CD8-positive, alpha-beta T cell (primary cell): ENCODE measurements at regions of chr15 and their contacts with region 1.

Region 1: GRCh38 chr15:79051029-79051428 is 39.6 kb downstream of the RASGRF1 start:
- DNase-seq: no peak
- ATAC-seq: no peak
- H3K4me3 ChIP-seq: no peak overlapping the region
- H3K4me3 Mint-ChIP-seq: no peak overlapping the region
- H3K27ac ChIP-seq: no peak overlapping the region
- H3K27ac Mint-ChIP-seq: no peak overlapping the region
- H3K4me1 ChIP-seq: no peaks in the 10 kb centered on the region
- H3K4me1 Mint-ChIP-seq: no peaks in the 10 kb centered on the region
- H3K27me3 ChIP-seq: no peaks in the 10 kb centered on the region
- H3K27me3 Mint-ChIP-seq: peaks cover 5% of the 10 kb centered on the region
- CTCF ChIP-seq: no peak

Region 2: GRCh38 chr15:78907577-78907976 is 143.5 kb before region 1 on chr15:
- CTCF ChIA-PET with region 1: no interaction called
- POLR2A ChIA-PET with region 1: no interaction called
- intact Hi-C with region 1: no loop called
- DNase-seq: peak in 1 of 9 experiments; percentile 41
- ATAC-seq: no peak
- H3K4me3 ChIP-seq: no peak overlapping the region
- H3K4me3 Mint-ChIP-seq: no peak overlapping the region
- H3K27ac ChIP-seq: no peak overlapping the region
- H3K27ac Mint-ChIP-seq: peak overlapping the region; percentile 55
- H3K4me1 ChIP-seq: no peaks in the 10 kb centered on the region
- H3K4me1 Mint-ChIP-seq: peaks cover 23% of the 10 kb centered on the region
- H3K27me3 ChIP-seq: no peaks in the 10 kb centered on the region
- H3K27me3 Mint-ChIP-seq: no peaks in the 10 kb centered on the region
- CTCF ChIP-seq: no peak

Region 3: GRCh38 chr15:78992416-78993256 is 58.4 kb before region 1 on chr15:
- CTCF ChIA-PET with region 1: no interaction called
- POLR2A ChIA-PET with region 1: no interaction called
- intact Hi-C with region 1: loop called in 1 of 2 experiments (anchors 10 kb)
- DNase-seq: no peak
- ATAC-seq: no peak
- H3K4me3 ChIP-seq: no peak overlapping the region
- H3K4me3 Mint-ChIP-seq: no peak overlapping the region
- H3K27ac ChIP-seq: no peak overlapping the region
- H3K27ac Mint-ChIP-seq: no peak overlapping the region
- H3K4me1 ChIP-seq: no peaks in the 10 kb centered on the region
- H3K4me1 Mint-ChIP-seq: no peaks in the 10 kb centered on the region
- H3K27me3 ChIP-seq: no peaks in the 10 kb centered on the region
- H3K27me3 Mint-ChIP-seq: peaks cover 4% of the 10 kb centered on the region
- CTCF ChIP-seq: no peak